Cardiac septum (tissue), 1 donor: ENCODE measurements at regions of chr1 and their contacts with region 1.

Region 1: GRCh38 chr1:216600730-216601609 is 122.3 kb downstream of the ESRRG start:
- DNase-seq: peak; percentile 87

Region 2: DNA sequence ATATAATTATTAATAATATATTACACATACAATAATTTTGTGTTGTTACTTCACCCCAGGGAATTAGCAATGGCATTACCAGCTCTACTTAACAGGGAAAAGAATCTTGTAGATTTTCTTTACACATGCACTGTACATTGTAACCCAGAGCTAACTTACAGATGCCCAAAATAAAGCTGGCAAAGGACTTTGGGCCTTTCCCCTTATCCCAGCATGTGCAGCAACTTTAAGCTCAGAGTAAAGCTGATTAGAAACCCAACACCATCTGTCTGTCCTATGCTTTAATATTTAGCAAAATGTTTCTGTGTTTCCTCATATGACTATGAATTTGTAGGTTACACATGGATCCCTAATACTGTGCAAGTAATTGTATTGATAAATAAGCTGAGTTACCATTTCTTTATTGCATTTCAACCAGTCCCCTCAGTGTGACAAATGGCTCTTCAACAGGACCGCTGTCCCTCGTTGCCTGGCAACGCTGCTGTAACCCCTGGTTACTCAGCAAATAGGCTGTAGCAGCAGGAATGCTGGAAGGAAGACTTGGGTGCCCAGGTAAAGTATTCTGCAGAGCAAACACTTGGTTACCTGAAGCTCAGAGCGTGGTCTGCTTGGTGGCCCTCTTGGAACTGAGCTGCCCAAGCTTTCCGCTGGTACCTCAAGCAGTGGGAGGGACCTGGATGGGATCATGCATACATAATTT is 178.0 kb before region 1 on chr1 and contains the start of gene USH2A:
- intact Hi-C with region 1: no loop called
- DNase-seq: no peak
- total RNA-seq, gene USH2A: 3.6 TPM

Region 3: GRCh38 chr1:216626394-216627067 is 25.6 kb after region 1 on chr1:
- intact Hi-C with region 1: loop called (anchors 1 kb)
- DNase-seq: no peak

Region 4: GRCh38 chr1:216723274-216723780 is 122.4 kb after region 1 on chr1 and contains the start of gene ESRRG:
- intact Hi-C with region 1: loop called (anchors 5 kb)
- DNase-seq: peak; percentile 78
- total RNA-seq, gene ESRRG: 32.3 TPM